Activated naive CD4-positive, alpha-beta T cell treated with anti-CD3 and anti-CD28 coated beads for 36 hours (primary cell): ENCODE measurements at regions of chrX and their contacts with region 1.

Region 1: DNA sequence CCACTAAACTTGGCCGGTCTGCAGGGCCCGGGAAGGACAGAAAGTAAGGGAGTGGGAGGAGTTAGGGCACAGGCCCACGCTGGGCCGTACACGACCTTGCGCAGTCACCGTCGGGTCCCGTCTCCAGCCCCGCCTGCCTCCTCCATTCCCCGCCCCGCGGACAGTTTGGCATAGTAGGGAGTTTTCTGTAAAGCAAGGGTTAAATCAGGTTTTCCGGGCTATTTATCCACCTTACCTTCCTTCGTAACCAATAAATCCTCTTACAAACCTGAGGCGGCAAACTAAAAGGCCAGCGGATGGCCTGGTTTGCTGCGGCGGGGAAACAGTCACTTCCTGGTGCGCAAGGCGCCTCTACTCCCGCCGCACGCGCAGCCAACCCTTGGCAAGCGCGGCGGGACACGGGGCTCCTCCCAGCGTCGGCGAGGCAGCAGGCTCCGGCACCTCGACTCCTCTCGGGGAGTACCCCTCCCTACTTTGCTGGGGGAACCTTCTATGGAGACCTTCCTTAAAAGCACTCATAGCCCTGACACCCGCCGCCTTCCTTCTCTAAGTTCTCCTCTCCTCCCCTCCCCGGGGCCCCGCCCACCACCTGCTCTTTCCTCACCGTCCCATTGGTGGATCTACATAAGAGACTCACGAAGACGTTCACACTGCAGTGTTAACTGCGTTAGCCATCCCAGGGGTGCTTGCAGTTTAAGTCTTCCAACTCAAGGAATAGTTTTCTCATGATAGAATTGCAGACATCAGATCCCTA is at the start of gene TRMT2B:
- DNase-seq: peak; percentile 85
- H3K4me3 Mint-ChIP-seq: peak within 1 kb of the TSS; percentile 85
- H3K27ac Mint-ChIP-seq: peak within 1 kb of the TSS; percentile 95
- H3K4me1 Mint-ChIP-seq: peaks cover 25% of the 10 kb centered on the region
- H3K27me3 Mint-ChIP-seq: no peaks in the 10 kb centered on the region
- total RNA-seq, gene TRMT2B: 20.2 to 22.2 TPM

Region 2: GRCh38 chrX:100829730-100830129 is 222.0 kb before region 1 on chrX:
- CTCF ChIA-PET with region 1: no interaction called
- intact Hi-C with region 1: loop called (anchors 1 kb)
- DNase-seq: peak; percentile 56
- H3K4me3 Mint-ChIP-seq: peak overlapping the region; percentile 36
- H3K27ac Mint-ChIP-seq: peak overlapping the region; percentile 97
- H3K4me1 Mint-ChIP-seq: peaks cover 39% of the 10 kb centered on the region
- H3K27me3 Mint-ChIP-seq: no peaks in the 10 kb centered on the region

Region 3: GRCh38 chrX:100994352-100995281 is 57.1 kb before region 1 on chrX:
- CTCF ChIA-PET with region 1: no interaction called
- intact Hi-C with region 1: loop called (anchors 1 kb)
- DNase-seq: peak; percentile 24
- H3K4me3 Mint-ChIP-seq: no peak overlapping the region
- H3K27ac Mint-ChIP-seq: peak overlapping the region; percentile 68
- H3K4me1 Mint-ChIP-seq: peaks cover 17% of the 10 kb centered on the region
- H3K27me3 Mint-ChIP-seq: no peaks in the 10 kb centered on the region

Region 4: GRCh38 chrX:101390664-101391525 is 339.2 kb after region 1 on chrX and contains the start of gene RPL36A:
- CTCF ChIA-PET with region 1: no interaction called
- intact Hi-C with region 1: loop called (anchors 5 kb)
- DNase-seq: peak; percentile 88
- H3K4me3 Mint-ChIP-seq: peak within 1 kb of the TSS; percentile 93
- H3K27ac Mint-ChIP-seq: peak within 1 kb of the TSS; percentile 94
- H3K4me1 Mint-ChIP-seq: peaks cover 18% of the 10 kb centered on the region
- H3K27me3 Mint-ChIP-seq: no peaks in the 10 kb centered on the region
- total RNA-seq, gene RPL36A: 446 to 500 TPM

Region 5: DNA sequence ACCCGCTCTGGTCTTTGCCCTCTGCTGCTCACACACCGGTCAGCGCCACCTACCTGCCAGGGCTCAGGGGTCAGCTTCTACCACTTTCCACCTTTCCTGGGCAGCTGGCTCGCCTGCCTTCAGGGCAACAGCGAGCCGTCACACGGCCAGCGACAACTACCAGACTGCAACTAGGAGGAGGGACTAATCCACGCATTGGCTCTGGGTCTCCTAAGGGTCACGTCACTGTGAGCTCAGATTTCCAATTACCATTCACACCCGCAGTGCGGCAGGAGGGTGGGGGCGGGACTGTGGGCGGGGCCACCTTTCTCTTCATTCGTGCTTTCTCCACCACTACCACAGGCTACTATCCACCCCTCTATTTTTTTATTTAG is 1104.1 kb after region 1 on chrX and contains the start of gene BEX5:
- CTCF ChIA-PET with region 1: no interaction called
- intact Hi-C with region 1: loop called (anchors 5 kb)
- DNase-seq: peak; percentile 73
- H3K4me3 Mint-ChIP-seq: peak within 1 kb of the TSS; percentile 98
- H3K27ac Mint-ChIP-seq: peak within 1 kb of the TSS; percentile 84
- H3K4me1 Mint-ChIP-seq: peaks cover 11% of the 10 kb centered on the region
- H3K27me3 Mint-ChIP-seq: peaks cover 3% of the 10 kb centered on the region
- total RNA-seq, gene BEX5: 6.6 to 7.2 TPM